ENCODE measurements at regions of chr1 and their contacts with region 1.

Region 1: GRCh38 chr1:148307583-148308190 is 155.6 kb upstream of the NBPF11 start:
- DNase-seq: no peak
- H3K4me3 Mint-ChIP-seq: no peak overlapping the region
- H3K27ac Mint-ChIP-seq: no peak overlapping the region
- H3K4me1 Mint-ChIP-seq: peaks cover 36% of the 10 kb centered on the region
- H3K27me3 Mint-ChIP-seq: peaks cover 39% of the 10 kb centered on the region

Region 2: GRCh38 chr1:148293651-148294050 is 14.0 kb before region 1 on chr1:
- intact Hi-C with region 1: no loop called
- DNase-seq: no peak
- H3K4me3 Mint-ChIP-seq: no peak overlapping the region
- H3K27ac Mint-ChIP-seq: no peak overlapping the region
- H3K4me1 Mint-ChIP-seq: peaks cover 4% of the 10 kb centered on the region
- H3K27me3 Mint-ChIP-seq: peaks cover 5% of the 10 kb centered on the region

Region 3: GRCh38 chr1:148318123-148318903 is 10.6 kb after region 1 on chr1:
- intact Hi-C with region 1: loop called (anchors 2 kb)
- DNase-seq: peak; percentile 73
- H3K4me3 Mint-ChIP-seq: peak overlapping the region; percentile 89
- H3K27ac Mint-ChIP-seq: peak overlapping the region; percentile 86
- H3K4me1 Mint-ChIP-seq: peaks cover 41% of the 10 kb centered on the region
- H3K27me3 Mint-ChIP-seq: peaks cover 32% of the 10 kb centered on the region

Measured in activated T-helper 1 cell treated with anti-CD3 and anti-CD28 coated beads, Interleukin-12 subunit alpha, Interleukin-12 subunit beta, Interleukin-2, Interleukin-4 antibody, amounts not matched to agents 30 ng/mL and 10 ng/mL and 1 ng/mL, durations not matched to agents 14 hours and 24 hours and 36 hours (primary cell).